ENCODE measurements at regions of chr3 and their contacts with region 1.

Region 1: DNA sequence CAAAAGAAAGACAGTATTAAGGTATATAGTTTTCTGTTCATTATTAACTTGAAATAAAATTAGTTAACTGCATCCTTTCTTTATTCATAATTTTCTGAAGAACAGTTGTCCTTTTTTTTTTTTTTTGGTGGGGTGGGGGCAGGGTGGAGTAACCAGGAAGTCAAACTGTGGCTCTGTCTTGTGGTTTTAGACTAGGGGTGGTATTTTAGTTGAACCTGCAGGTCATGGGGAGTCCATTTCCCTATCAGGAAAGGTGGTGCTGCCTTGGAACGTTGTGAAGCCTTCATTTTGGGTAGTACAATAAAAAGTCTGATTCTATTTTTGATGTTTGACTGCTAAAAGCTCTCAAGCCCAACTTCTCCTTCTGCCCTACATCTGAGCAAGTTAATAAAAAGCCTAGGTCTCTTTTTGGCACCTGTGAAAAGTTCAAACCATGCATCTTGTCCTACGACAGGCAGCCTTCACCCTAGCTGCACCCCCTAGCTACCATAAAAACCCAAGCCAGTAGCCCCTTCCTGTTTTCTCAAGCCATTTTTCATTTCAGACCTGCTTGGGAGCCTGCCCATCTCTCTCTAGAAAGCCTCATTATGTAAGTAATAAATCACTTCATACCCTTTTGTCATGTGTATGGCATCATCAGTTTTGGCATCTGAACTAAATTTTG is 31.2 kb upstream of the RIOX2 start:
- DNase-seq: no peak
- H3K4me3 Mint-ChIP-seq: peak overlapping the region; percentile 25
- H3K27ac Mint-ChIP-seq: peak overlapping the region; percentile 60
- H3K4me1 Mint-ChIP-seq: peaks cover 57% of the 10 kb centered on the region
- H3K27me3 Mint-ChIP-seq: no peaks in the 10 kb centered on the region

Region 2: GRCh38 chr3:97895216-97895615 is 108.2 kb before region 1 on chr3:
- intact Hi-C with region 1: no loop called
- DNase-seq: no peak
- H3K4me3 Mint-ChIP-seq: no peak overlapping the region
- H3K27ac Mint-ChIP-seq: no peak overlapping the region
- H3K4me1 Mint-ChIP-seq: no peaks in the 10 kb centered on the region
- H3K27me3 Mint-ChIP-seq: no peaks in the 10 kb centered on the region

Region 3: DNA sequence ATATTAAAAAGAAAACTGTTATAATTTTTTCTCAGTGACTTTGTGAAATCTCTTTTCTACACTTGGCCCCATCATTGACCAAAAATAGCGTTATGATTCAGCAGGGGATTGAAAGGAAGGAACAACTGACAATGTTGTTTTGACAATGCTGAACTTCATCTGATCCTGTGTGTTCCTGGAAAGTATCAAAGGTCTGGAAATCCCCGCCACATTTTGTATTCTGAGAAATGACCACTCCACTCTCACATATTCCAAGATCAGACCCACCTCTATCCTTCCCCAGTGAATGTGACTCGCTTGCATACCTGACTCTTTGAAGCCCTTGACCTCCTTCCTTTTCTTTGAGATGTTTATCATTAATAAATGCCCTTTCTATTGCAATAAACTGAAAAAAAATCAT is 21.6 kb before region 1 on chr3:
- intact Hi-C with region 1: loop called (anchors 2 kb)
- DNase-seq: peak; percentile 43
- H3K4me3 Mint-ChIP-seq: peak overlapping the region; percentile 9
- H3K27ac Mint-ChIP-seq: peak overlapping the region; percentile 89
- H3K4me1 Mint-ChIP-seq: peaks cover 49% of the 10 kb centered on the region
- H3K27me3 Mint-ChIP-seq: no peaks in the 10 kb centered on the region

Region 4: DNA sequence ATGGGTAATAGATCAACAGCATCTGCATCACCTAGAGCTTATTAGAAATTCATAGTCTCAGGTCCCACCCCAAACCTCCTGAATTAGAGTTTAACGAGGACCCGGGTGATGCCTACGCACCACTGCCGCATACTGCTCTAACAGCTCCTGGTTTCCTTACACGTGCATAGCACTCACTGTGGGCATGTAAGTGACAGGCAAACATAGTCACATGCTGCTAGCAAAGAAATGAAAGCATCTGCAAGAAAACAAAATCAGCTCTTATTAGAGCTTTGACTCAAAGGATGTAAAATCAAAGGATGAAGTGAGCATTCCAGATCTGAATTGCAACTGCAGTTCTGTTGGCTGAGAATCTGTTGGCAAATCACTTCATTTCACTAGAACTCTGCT is 12.2 kb before region 1 on chr3:
- intact Hi-C with region 1: loop called (anchors 2 kb)
- DNase-seq: no peak
- H3K4me3 Mint-ChIP-seq: peak overlapping the region; percentile 70
- H3K27ac Mint-ChIP-seq: peak overlapping the region; percentile 68
- H3K4me1 Mint-ChIP-seq: peaks cover 48% of the 10 kb centered on the region
- H3K27me3 Mint-ChIP-seq: no peaks in the 10 kb centered on the region

Region 5: GRCh38 chr3:98367467-98368246 is 364.2 kb after region 1 on chr3:
- intact Hi-C with region 1: no loop called
- DNase-seq: no peak
- H3K4me3 Mint-ChIP-seq: no peak overlapping the region
- H3K27ac Mint-ChIP-seq: no peak overlapping the region
- H3K4me1 Mint-ChIP-seq: no peaks in the 10 kb centered on the region
- H3K27me3 Mint-ChIP-seq: peaks cover 17% of the 10 kb centered on the region

Measured in activated T-helper 1 cell treated with anti-CD3 and anti-CD28 coated beads, Interleukin-12 subunit alpha, Interleukin-12 subunit beta, Interleukin-2, Interleukin-4 antibody, amounts not matched to agents 30 ng/mL and 10 ng/mL and 1 ng/mL, durations not matched to agents 14 hours and 24 hours and 36 hours (primary cell).